ENCODE measurements at regions of chr4 and their contacts with region 1.

Region 1: GRCh38 chr4:99563310-99564186 is at the start of gene TRMT10A:
- DNase-seq: peak; percentile 88 to 98 (median 92)
- ATAC-seq: peak; percentile 81
- H3K4me3 ChIP-seq: peak within 1 kb of the TSS; percentile 80
- H3K4me3 Mint-ChIP-seq: peak within 1 kb of the TSS; percentile 91
- H3K27ac ChIP-seq: peak within 1 kb of the TSS; percentile 98 to 99
- H3K27ac Mint-ChIP-seq: peak within 1 kb of the TSS; percentile 99
- H3K4me1 ChIP-seq: peaks cover 11% of the 10 kb centered on the region
- H3K4me1 Mint-ChIP-seq: peaks cover 25% of the 10 kb centered on the region
- H3K27me3 ChIP-seq: peaks cover 0 to 9% of the 10 kb centered on the region in 2 experiments
- H3K27me3 Mint-ChIP-seq: peaks cover 28% of the 10 kb centered on the region
- CTCF ChIP-seq: no peak
- total RNA-seq, gene TRMT10A: 1.6 to 2.0 TPM

Region 2: DNA sequence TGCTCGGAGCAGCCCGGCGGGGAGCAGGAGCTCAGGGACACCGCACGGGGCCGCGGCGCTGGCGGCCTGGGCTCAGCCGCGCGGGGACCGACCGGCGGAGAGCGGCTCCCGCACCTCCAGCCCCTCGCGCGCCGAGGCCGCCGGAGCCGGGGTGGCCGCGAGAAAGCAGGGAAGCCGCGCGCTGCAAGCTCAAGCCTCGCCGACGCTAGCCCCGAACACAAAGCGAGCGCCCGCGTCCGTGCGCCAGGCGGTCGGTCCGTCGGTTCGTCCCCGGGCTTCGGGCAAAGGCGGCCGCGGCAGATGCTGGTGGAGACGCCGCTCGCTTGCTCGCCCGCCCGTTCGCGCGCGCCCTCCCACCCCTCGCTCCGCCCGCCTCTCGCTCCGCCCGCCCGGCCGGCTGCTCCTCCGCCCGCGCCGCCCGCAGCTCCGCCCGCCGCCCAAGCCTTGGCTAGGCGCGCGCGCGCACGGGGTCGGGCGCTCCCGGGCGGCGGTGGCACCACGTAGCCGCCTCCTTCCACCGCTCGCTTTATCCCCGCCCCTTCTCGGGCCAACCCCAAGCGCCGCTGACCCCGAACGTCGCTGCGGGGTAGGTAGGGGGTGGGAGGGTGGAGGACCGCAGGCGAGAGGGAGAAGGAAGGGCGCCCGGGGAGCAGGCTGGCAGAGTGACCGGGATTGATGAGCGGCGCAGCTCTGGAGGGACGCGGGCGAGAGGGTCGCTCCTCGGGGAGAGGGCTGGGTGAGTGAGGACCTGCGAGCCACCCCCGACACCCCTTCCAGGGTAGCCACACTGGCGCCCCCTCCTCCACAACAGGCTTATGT is 905.1 kb before region 1 on chr4 and contains the start of gene TSPAN5:
- CTCF ChIA-PET with region 1: no interaction called
- POLR2A ChIA-PET with region 1: no interaction called
- intact Hi-C with region 1: loop called in 1 of 2 experiments (anchors 5 kb)
- DNase-seq: peak; percentile 56 to 93 (median 84)
- ATAC-seq: peak; percentile 67
- H3K4me3 ChIP-seq: peak within 1 kb of the TSS; percentile 89
- H3K4me3 Mint-ChIP-seq: peak within 1 kb of the TSS; percentile 89
- H3K27ac ChIP-seq: peak within 1 kb of the TSS in 1 of 2 donors; percentile 39
- H3K27ac Mint-ChIP-seq: peak within 1 kb of the TSS; percentile 98
- H3K4me1 ChIP-seq: peaks cover 50% of the 10 kb centered on the region
- H3K4me1 Mint-ChIP-seq: peaks cover 87% of the 10 kb centered on the region
- H3K27me3 ChIP-seq: no peaks in the 10 kb centered on the region
- H3K27me3 Mint-ChIP-seq: no peaks in the 10 kb centered on the region
- CTCF ChIP-seq: no peak
- total RNA-seq, gene TSPAN5: 1.8 to 2.8 TPM

Region 3: GRCh38 chr4:99808260-99808857 is 244.8 kb after region 1 on chr4:
- CTCF ChIA-PET with region 1: interaction called, 5 read pairs
- POLR2A ChIA-PET with region 1: interaction called, 16 read pairs
- intact Hi-C with region 1: loop called (anchors 1 kb)
- DNase-seq: peak; percentile 53 to 82 (median 66)
- ATAC-seq: peak; percentile 98
- H3K4me3 ChIP-seq: no peak overlapping the region
- H3K4me3 Mint-ChIP-seq: no peak overlapping the region
- H3K27ac ChIP-seq: no peak overlapping the region
- H3K27ac Mint-ChIP-seq: no peak overlapping the region
- H3K4me1 ChIP-seq: peaks cover 3% of the 10 kb centered on the region
- H3K4me1 Mint-ChIP-seq: peaks cover 6% of the 10 kb centered on the region
- H3K27me3 ChIP-seq: no peaks in the 10 kb centered on the region
- H3K27me3 Mint-ChIP-seq: peaks cover 6% of the 10 kb centered on the region
- CTCF ChIP-seq: peak; percentile 85

Region 4: GRCh38 chr4:99885063-99885664 is 321.6 kb after region 1 on chr4:
- CTCF ChIA-PET with region 1: no interaction called
- POLR2A ChIA-PET with region 1: interaction called, 4 read pairs
- intact Hi-C with region 1: loop called (anchors 1 to 2 kb)
- DNase-seq: peak in 7 of 14 experiments; percentile 10 to 76 (median 30)
- ATAC-seq: peak; percentile 68
- H3K4me3 ChIP-seq: no peak overlapping the region
- H3K4me3 Mint-ChIP-seq: no peak overlapping the region
- H3K27ac ChIP-seq: no peak overlapping the region
- H3K27ac Mint-ChIP-seq: no peak overlapping the region
- H3K4me1 ChIP-seq: no peaks in the 10 kb centered on the region
- H3K4me1 Mint-ChIP-seq: peaks cover 17% of the 10 kb centered on the region
- H3K27me3 ChIP-seq: no peaks in the 10 kb centered on the region
- H3K27me3 Mint-ChIP-seq: no peaks in the 10 kb centered on the region
- CTCF ChIP-seq: peak; percentile 61

Region 5: GRCh38 chr4:100060765-100061416 is 497.3 kb after region 1 on chr4:
- CTCF ChIA-PET with region 1: no interaction called
- POLR2A ChIA-PET with region 1: no interaction called
- intact Hi-C with region 1: loop called (anchors 2 kb)
- DNase-seq: no peak
- ATAC-seq: no peak
- H3K4me3 ChIP-seq: no peak overlapping the region
- H3K4me3 Mint-ChIP-seq: no peak overlapping the region
- H3K27ac ChIP-seq: no peak overlapping the region
- H3K27ac Mint-ChIP-seq: no peak overlapping the region
- H3K4me1 ChIP-seq: no peaks in the 10 kb centered on the region
- H3K4me1 Mint-ChIP-seq: no peaks in the 10 kb centered on the region
- H3K27me3 ChIP-seq: peaks cover 0 to 3% of the 10 kb centered on the region in 2 experiments
- H3K27me3 Mint-ChIP-seq: peaks cover 22% of the 10 kb centered on the region
- CTCF ChIP-seq: no peak